OCI-LY7 (cell line): ENCODE measurements at regions of chr11 and their contacts with region 1.

Region 1: DNA sequence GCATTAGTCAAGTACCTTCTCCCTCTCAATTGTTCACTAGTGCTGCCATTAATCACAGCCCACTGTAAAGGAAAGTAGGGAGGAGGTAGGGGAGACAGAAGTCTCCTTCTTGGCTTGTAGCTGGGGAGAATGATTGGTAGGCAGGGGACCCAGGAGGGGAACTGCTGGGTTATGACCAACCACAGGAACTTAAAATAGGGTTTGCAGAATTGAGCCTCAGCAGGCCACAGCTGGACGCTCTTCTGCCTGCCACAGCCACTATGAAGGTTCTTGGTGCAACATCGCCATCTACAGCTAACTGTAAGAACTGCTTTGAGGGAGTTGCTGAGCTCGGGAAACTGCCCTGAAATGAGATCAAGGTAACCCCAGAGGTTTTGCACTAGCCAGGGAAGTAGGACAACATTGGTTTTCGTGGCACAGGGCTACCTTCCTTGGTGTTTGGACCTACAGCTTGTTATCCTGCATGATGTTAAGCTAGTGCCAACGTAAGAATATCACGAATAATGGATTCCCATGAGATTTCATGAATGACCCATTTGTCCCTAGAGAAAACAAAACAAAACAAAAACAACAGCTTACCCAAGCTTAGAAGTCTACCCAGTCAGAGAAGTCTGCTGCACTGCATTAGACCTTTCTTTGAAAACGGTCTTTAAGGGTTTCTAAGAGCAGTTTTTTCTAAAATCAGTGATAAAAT is 787.1 kb upstream of the API5 start:
- DNase-seq: peak; percentile 50
- H3K4me3 ChIP-seq: no peak overlapping the region
- H3K27ac ChIP-seq: no peak overlapping the region
- H3K4me1 ChIP-seq: no peaks in the 10 kb centered on the region
- CTCF ChIP-seq: peak; percentile 86

Region 2: GRCh38 chr11:41461057-41461681 is 1063.5 kb before region 1 on chr11:
- CTCF ChIA-PET with region 1: no interaction called
- POLR2A ChIA-PET with region 1: no interaction called
- intact Hi-C with region 1: loop called (anchors 1 kb)
- DNase-seq: peak; percentile 8
- H3K4me3 ChIP-seq: no peak overlapping the region
- H3K27ac ChIP-seq: no peak overlapping the region
- H3K4me1 ChIP-seq: no peaks in the 10 kb centered on the region
- CTCF ChIP-seq: peak; percentile 87

Region 3: GRCh38 chr11:42363701-42364100 is 161.0 kb before region 1 on chr11:
- CTCF ChIA-PET with region 1: no interaction called
- POLR2A ChIA-PET with region 1: no interaction called
- intact Hi-C with region 1: no loop called
- DNase-seq: no peak
- H3K4me3 ChIP-seq: no peak overlapping the region
- H3K27ac ChIP-seq: no peak overlapping the region
- H3K4me1 ChIP-seq: no peaks in the 10 kb centered on the region
- CTCF ChIP-seq: no peak

Region 4: DNA sequence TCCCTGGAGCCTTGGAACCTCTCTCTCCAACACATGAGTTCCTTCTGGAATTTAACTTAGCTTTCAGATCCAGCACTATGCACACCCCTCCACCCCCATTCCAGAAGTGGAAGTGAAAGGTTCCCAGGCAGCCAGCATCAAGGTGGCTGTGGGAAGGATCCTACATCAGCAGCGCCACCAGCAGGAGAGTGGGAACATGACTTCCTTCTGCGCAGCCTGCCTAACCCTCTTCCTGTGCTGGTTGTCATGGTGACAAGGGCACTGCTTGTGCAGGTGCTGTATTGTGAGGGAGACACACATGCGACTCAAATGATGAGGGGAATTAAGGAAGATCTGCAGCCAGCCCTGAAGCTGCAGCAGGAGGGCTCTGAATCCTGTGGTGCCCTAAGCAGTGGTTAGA is 117.3 kb before region 1 on chr11:
- CTCF ChIA-PET with region 1: no interaction called
- POLR2A ChIA-PET with region 1: no interaction called
- intact Hi-C with region 1: no loop called
- DNase-seq: peak; percentile 37
- H3K4me3 ChIP-seq: no peak overlapping the region
- H3K27ac ChIP-seq: no peak overlapping the region
- H3K4me1 ChIP-seq: no peaks in the 10 kb centered on the region
- CTCF ChIP-seq: peak; percentile 50

Region 5: GRCh38 chr11:42482822-42483221 is 41.9 kb before region 1 on chr11:
- CTCF ChIA-PET with region 1: no interaction called
- POLR2A ChIA-PET with region 1: no interaction called
- intact Hi-C with region 1: no loop called
- DNase-seq: no peak
- H3K4me3 ChIP-seq: no peak overlapping the region
- H3K27ac ChIP-seq: no peak overlapping the region
- H3K4me1 ChIP-seq: no peaks in the 10 kb centered on the region
- CTCF ChIP-seq: no peak